CD8-positive, alpha-beta T cell (primary cell): ENCODE measurements at regions of chr19 and their contacts with region 1.

Region 1: GRCh38 chr19:12610540-12611360 is at the starts of genes ZNF490 and ZNF791:
- DNase-seq: peak; percentile 93 to 98 (median 96)
- ATAC-seq: peak; percentile 86
- H3K4me3 ChIP-seq: peak within 1 kb of the TSS; percentile 83 to 85
- H3K4me3 Mint-ChIP-seq: peak within 1 kb of the TSS; percentile 100
- H3K27ac ChIP-seq: peak within 1 kb of the TSS; percentile 87 to 90
- H3K27ac Mint-ChIP-seq: peak within 1 kb of the TSS; percentile 100
- H3K4me1 ChIP-seq: peaks cover 44% of the 10 kb centered on the region
- H3K4me1 Mint-ChIP-seq: peaks cover 47% of the 10 kb centered on the region
- H3K27me3 ChIP-seq: no peaks in the 10 kb centered on the region
- H3K27me3 Mint-ChIP-seq: no peaks in the 10 kb centered on the region
- CTCF ChIP-seq: no peak
- total RNA-seq, gene ZNF490: 5.1 to 7.0 TPM
- total RNA-seq, gene ZNF791: 61.0 to 67.0 TPM

Region 2: GRCh38 chr19:11887611-11888531 is 722.9 kb before region 1 on chr19 and contains the start of gene ZNF69:
- CTCF ChIA-PET with region 1: no interaction called
- POLR2A ChIA-PET with region 1: no interaction called
- intact Hi-C with region 1: no loop called
- DNase-seq: peak; percentile 16 to 83 (median 67)
- ATAC-seq: peak; percentile 89
- H3K4me3 ChIP-seq: peak within 1 kb of the TSS; percentile 63 to 80
- H3K4me3 Mint-ChIP-seq: peak within 1 kb of the TSS; percentile 93
- H3K27ac ChIP-seq: peak within 1 kb of the TSS; percentile 46 to 48
- H3K27ac Mint-ChIP-seq: peak within 1 kb of the TSS; percentile 91
- H3K4me1 ChIP-seq: peaks cover 12% of the 10 kb centered on the region
- H3K4me1 Mint-ChIP-seq: peaks cover 36% of the 10 kb centered on the region
- H3K27me3 ChIP-seq: no peaks in the 10 kb centered on the region
- H3K27me3 Mint-ChIP-seq: no peaks in the 10 kb centered on the region
- CTCF ChIP-seq: no peak
- total RNA-seq, gene ZNF69: 1.7 to 2.0 TPM

Region 3: DNA sequence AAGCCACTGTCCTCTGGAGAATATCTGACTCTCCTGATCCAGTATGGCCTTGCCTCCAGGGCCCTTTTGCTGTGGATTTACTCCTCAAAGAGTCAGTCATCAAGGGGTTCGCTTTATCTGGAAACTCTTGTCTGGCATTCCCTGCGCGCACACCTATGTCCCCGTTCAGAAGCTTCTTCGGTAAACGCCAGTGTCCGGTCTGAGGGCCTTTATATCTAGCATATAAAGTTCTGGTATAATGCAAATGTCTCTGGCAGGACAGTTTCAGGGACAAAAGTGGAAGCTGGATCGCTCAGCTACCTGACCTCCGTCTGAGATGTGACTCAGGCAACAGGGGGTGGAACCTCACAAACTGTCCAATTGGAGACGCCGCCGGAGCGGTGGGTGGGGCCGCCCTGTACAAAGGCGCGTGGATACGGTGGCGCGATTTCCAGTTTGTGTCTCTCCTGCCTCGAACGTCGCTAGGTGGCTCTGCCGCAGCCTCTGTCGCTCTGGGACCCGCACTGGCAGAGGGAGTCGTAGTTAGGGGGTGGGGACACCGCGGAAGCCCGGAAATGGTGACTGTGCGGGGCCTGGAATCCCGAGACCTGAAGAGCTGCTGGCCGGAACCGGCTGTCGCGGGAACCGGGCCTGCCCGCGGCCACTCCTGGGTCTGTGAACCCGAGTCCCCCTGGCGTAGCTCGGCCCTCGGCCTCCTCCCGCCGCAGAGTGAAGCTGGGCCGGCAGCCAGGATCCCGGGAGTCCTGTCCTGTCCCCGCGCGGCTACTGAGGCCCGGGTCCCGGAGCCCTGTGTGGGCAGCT is 115.5 kb before region 1 on chr19:
- CTCF ChIA-PET with region 1: interaction called, 3 read pairs
- POLR2A ChIA-PET with region 1: no interaction called
- intact Hi-C with region 1: loop called in 1 of 2 experiments (anchors 1 kb)
- DNase-seq: peak; percentile 81 to 96 (median 93)
- ATAC-seq: peak; percentile 99
- H3K4me3 ChIP-seq: peak overlapping the region; percentile 53 to 64
- H3K4me3 Mint-ChIP-seq: peak overlapping the region; percentile 91
- H3K27ac ChIP-seq: peak overlapping the region; percentile 68 to 79
- H3K27ac Mint-ChIP-seq: peak overlapping the region; percentile 94
- H3K4me1 ChIP-seq: peaks cover 8% of the 10 kb centered on the region
- H3K4me1 Mint-ChIP-seq: peaks cover 18% of the 10 kb centered on the region
- H3K27me3 ChIP-seq: no peaks in the 10 kb centered on the region
- H3K27me3 Mint-ChIP-seq: no peaks in the 10 kb centered on the region
- CTCF ChIP-seq: peak; percentile 55

Region 4: GRCh38 chr19:12574036-12574435 is 36.7 kb before region 1 on chr19:
- CTCF ChIA-PET with region 1: no interaction called
- POLR2A ChIA-PET with region 1: no interaction called
- intact Hi-C with region 1: no loop called
- DNase-seq: peak in 2 of 9 experiments; percentile 25 to 52
- ATAC-seq: peak; percentile 57
- H3K4me3 ChIP-seq: peak overlapping the region in 1 of 2 experiments; percentile 29
- H3K4me3 Mint-ChIP-seq: peak overlapping the region; percentile 27
- H3K27ac ChIP-seq: no peak overlapping the region
- H3K27ac Mint-ChIP-seq: peak overlapping the region; percentile 65
- H3K4me1 ChIP-seq: peaks cover 9% of the 10 kb centered on the region
- H3K4me1 Mint-ChIP-seq: peaks cover 11% of the 10 kb centered on the region
- H3K27me3 ChIP-seq: no peaks in the 10 kb centered on the region
- H3K27me3 Mint-ChIP-seq: no peaks in the 10 kb centered on the region
- CTCF ChIP-seq: no peak

Region 5: DNA sequence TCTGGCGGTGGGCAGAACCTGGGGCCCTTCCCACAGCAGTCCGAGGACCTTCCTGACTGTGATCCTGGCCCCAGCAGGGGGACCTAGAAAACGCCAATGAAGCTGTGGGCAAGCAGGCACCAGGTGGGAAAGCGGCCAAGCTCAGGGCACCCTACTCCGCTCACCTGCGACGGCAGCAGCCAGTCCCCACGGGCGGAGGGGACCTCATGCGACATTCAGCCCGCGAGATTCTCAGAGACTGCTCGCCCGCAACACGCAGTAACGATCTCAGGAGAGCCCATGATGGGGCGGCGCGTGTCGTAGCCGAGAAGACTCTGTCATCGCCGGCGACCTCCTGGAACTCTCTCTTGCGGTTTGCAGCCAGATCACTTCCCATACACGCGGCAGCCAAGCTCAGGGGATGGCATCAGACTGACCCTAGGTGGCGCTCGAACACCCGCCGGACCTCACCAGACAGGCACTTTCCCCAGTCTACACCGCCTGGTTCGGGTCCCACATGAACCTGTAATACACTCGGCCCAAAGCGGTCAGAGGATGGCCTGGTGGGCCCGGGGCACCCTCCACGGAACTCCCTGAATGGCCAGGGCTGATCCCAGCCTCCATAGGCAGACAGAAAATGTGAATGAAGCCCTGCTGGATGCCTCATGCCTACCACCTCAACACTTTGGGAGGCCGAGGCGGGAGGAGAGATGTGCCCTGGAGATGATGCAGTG is 29.3 kb after region 1 on chr19:
- CTCF ChIA-PET with region 1: interaction called, 4 read pairs
- POLR2A ChIA-PET with region 1: interaction called, 4 read pairs
- intact Hi-C with region 1: loop called in 1 of 2 experiments (anchors 2 kb)
- DNase-seq: peak; percentile 64 to 89 (median 84)
- ATAC-seq: peak; percentile 81
- H3K4me3 ChIP-seq: peak overlapping the region; percentile 23 to 38
- H3K4me3 Mint-ChIP-seq: peak overlapping the region; percentile 79
- H3K27ac ChIP-seq: peak overlapping the region; percentile 8 to 15
- H3K27ac Mint-ChIP-seq: peak overlapping the region; percentile 70
- H3K4me1 ChIP-seq: peaks cover 18% of the 10 kb centered on the region
- H3K4me1 Mint-ChIP-seq: peaks cover 21% of the 10 kb centered on the region
- H3K27me3 ChIP-seq: no peaks in the 10 kb centered on the region
- H3K27me3 Mint-ChIP-seq: no peaks in the 10 kb centered on the region
- CTCF ChIP-seq: peak; percentile 68

Region 6: GRCh38 chr19:12749938-12750521 is 139.3 kb after region 1 on chr19:
- CTCF ChIA-PET with region 1: no interaction called
- POLR2A ChIA-PET with region 1: no interaction called
- intact Hi-C with region 1: no loop called
- DNase-seq: no peak
- ATAC-seq: no peak
- H3K4me3 ChIP-seq: no peak overlapping the region
- H3K4me3 Mint-ChIP-seq: no peak overlapping the region
- H3K27ac ChIP-seq: no peak overlapping the region
- H3K27ac Mint-ChIP-seq: no peak overlapping the region
- H3K4me1 ChIP-seq: no peaks in the 10 kb centered on the region
- H3K4me1 Mint-ChIP-seq: peaks cover 3% of the 10 kb centered on the region
- H3K27me3 ChIP-seq: no peaks in the 10 kb centered on the region
- H3K27me3 Mint-ChIP-seq: peaks cover 19% of the 10 kb centered on the region
- CTCF ChIP-seq: no peak